ENCODE measurements at regions of chr16 and their contacts with region 1.

Region 1: GRCh38 chr16:51184702-51185433 is 33.8 kb upstream of the SALL1 start:
- DNase-seq: no peak
- H3K4me3 ChIP-seq: no peak overlapping the region
- H3K27ac ChIP-seq: no peak overlapping the region
- H3K4me1 ChIP-seq: peaks cover 3% of the 10 kb centered on the region
- H3K27me3 ChIP-seq: no peaks in the 10 kb centered on the region

Region 2: DNA sequence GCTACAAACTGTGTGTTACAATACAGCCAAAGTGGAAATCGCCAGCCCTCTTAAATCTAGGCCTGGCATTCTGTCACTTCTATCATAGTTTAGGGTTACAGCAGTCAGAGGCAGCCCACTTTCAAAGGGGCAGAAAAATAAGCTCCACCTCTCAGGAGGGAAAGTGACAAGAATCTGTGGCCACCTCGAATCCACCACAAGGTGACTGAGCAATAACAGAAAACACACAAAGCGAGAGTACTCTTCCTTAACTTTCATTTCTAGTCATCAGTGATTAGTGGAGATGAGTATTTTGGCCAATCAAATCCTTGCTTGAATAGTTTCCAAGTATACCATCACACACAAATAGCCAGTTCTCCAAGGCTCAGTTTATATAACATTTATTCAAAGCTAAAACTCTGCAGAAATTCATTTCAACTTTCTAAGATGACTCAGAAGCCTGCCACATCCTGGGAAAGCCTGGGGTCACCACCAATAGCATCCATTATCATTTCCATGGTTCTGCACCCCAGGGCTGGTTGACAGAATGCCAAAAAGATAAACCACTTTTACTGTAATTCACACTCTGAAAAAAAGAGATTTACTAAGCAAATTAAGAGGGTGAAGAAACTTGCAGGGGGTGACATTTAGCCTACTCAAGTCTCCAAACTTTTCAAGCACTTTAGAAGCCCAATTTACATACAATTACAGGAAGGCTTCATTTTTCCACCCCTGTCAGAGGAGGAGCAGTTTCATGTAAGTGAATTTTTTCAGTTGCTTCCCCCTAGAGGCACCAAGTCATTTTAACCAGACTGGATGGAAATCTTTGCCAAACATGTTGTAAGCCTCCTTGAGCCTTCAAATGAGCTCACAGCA is 100.6 kb before region 1 on chr16:
- in situ Hi-C with region 1: loop called (anchors 25 kb)
- DNase-seq: no peak
- H3K4me3 ChIP-seq: no peak overlapping the region
- H3K27ac ChIP-seq: no peak overlapping the region
- H3K4me1 ChIP-seq: no peaks in the 10 kb centered on the region
- H3K27me3 ChIP-seq: no peaks in the 10 kb centered on the region

Region 3: DNA sequence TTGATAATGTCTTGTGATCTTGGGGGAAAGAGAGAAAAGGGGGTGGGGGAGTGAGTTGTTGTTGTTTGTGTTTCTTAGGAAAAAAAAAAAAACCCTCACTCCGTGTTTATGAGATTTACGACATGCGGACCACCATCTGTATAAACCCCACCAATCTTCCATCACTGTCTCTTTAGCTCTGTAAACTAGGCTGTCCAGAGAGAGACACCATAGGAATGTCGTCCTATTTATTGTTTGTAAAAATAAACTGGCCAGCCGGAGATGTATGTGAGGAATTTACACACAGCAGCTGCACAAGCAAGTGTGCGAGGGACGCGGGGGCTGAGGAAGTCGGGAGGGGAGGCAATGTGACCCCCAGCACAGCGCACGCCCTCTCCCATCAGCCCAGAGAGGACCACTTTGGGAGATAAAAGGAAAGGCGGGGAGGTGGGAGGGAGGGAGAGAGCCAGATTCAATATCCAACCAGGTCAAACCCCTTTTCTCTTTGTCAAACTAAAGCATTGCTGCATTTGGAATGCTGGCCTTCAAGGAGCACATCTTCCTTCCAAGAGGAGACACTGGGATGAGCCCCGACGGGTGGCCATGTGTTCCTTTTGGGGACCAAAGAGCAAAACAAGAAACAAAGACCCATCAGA is 102.4 kb after region 1 on chr16:
- in situ Hi-C with region 1: no loop called
- DNase-seq: no peak
- H3K4me3 ChIP-seq: no peak overlapping the region
- H3K27ac ChIP-seq: no peak overlapping the region
- H3K4me1 ChIP-seq: no peaks in the 10 kb centered on the region
- H3K27me3 ChIP-seq: no peaks in the 10 kb centered on the region

Measured in GM23248 (cell line).